ENCODE measurements at regions of chr15 and their contacts with region 1.

Region 1: DNA sequence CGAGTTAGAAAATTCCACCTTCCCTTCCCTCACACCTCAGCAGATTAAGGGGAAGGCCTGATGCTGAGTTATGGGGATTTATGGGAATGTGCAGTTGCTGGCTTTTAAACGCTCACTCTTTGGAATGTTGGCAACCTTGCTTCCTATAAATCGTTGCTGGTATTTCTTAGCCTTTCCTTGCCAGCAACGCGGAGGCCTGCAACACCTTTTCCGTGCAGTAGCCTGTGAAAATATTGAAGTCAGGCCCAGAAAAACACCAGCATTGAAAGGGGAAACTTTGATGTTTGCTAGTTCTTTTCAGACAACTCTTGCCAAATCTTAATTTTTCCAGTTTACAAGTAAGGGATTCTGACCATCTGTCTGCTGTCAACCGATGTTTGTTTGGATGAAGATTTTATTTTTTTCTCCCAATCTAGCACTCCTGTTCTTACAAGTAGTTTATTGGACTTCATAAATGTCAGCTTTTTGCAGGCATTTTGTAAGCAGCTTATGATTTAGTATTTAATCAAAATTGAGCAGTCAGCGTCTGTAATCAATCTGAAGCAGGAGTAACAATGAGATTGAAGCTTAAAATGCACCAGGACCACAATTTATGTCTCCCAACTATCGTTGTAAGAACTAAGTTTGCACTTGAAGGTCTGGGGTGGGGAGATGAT is 251.0 kb downstream of the RPLP1 start:
- DNase-seq: no peak

Region 2: GRCh38 chr15:69666411-69666882 is 37.2 kb before region 1 on chr15:
- intact Hi-C with region 1: loop called in 1 of 2 experiments (anchors 1 kb)
- DNase-seq: peak; percentile 82

Region 3: DNA sequence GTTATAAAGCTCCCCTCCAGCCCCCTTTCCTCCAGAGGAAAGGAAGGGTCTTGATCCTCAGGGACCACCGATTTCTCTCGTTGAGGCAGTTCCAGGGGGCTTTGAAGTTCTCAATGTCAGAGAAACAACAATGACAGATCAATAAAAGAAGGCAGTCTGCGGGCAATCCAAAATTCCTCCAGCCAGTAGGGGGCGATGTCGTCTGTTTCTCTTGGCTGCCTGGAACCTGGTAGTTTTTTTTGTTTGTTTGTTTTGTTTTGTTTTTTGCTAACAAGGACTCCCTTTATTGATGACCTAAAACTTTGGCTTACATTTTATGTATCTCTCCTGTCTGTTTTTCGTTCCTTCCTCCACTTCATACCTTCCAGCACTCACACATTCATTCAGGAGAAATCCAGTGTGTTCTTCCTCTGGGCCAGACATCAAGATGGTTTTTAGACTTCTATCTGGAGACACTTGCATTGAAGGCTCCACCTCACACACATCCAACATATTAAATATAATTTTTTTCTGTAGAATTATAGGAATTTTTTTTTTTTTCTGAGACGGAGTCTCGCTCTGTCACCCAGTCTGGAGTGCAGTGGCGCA is 25.6 kb after region 1 on chr15:
- intact Hi-C with region 1: no loop called
- DNase-seq: no peak

Measured in posterior vena cava (tissue), 2 donors.